ENCODE measurements at regions of chr10 and their contacts with region 1.

Region 1: DNA sequence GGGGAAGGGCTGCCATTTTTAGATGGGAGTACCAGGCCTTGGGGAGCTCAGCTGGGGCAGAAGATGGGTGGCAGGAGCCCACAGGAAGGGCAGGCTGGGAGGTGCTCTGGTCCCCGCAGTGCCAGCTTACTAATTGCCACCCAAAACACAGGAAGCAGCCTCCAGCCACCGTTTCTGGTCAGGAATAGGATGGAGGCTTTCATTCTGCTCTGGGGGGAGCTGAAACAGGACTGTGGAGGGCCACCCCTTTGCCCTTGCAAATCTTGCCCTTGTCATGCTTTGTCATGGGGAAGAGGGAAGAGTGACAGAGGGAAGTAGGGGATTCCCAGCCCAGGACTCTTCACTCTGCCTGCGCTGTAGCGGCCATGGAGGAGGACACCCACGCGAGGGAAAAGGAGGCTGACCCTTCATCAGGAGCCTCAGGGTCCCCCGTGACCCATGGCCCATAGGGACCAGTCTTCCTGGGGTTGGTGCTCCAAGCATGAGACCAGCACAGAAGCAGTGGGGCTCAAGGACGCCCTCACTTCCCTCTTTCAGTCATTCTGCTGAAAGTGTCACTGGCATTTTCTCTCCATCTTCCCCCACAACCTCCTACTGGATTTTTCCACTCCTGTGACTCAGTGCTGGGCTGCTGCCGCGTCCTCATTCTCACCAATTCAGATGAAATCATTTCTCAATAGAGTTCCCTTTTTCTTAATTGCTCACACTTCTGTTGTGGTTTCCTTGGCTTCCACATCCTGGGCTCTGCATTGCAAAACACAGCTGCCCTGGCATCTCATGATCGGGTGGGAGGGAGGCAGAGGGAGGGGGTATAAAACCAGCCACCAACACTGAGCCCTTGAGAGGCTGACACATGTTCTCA is 61.9 kb downstream of the MKI67 start:
- DNase-seq: peak; percentile 68
- ATAC-seq: peak; percentile 76
- H3K4me3 Mint-ChIP-seq: peak overlapping the region; percentile 57
- H3K27ac Mint-ChIP-seq: peak overlapping the region; percentile 86
- H3K4me1 Mint-ChIP-seq: peaks cover 71% of the 10 kb centered on the region
- H3K27me3 Mint-ChIP-seq: no peaks in the 10 kb centered on the region
- CTCF ChIP-seq: no peak

Region 2: DNA sequence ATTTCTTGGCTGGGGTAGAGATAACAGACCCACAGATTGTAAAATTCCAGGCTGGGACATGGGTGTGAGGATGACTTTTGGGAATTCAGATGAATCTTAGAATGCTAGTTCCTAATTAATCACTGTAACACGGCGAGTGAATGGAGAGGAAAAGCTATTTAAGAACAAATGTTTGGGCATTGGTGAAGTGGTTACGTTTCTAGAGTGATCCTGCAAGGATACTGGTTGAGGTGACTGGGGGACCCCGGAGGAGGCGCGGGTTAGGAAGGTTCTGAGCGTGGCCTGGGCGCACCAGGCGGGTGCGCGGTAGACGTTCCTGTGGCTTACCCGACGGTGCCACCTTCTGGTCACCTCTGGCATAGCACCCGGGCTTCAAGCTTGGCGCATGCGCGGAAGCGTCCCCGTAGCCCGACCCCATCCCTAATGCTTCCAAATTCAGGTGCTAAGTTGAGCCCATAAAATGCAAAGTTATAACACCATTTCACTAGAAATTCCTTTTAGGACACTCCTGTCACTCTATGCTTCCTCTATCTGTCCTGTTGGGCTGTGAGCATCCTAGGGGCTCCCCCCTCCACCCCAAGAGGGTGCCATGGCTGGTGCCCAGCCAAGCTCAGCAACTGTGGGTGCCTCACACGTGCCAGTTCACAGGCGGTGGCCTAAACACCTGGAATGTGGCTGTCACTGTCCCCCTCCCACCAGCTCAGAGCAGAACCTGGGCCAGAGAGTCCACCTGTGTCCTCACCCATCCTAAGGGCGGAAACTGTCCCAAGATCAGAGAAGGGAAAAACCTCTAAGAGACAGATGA is 53.0 kb before region 1 on chr10:
- CTCF ChIA-PET with region 1: interaction called, 19 read pairs
- POLR2A ChIA-PET with region 1: no interaction called
- intact Hi-C with region 1: loop called (anchors 1 kb)
- DNase-seq: peak; percentile 87
- ATAC-seq: peak; percentile 99
- H3K4me3 Mint-ChIP-seq: no peak overlapping the region
- H3K27ac Mint-ChIP-seq: peak overlapping the region; percentile 62
- H3K4me1 Mint-ChIP-seq: peaks cover 9% of the 10 kb centered on the region
- H3K27me3 Mint-ChIP-seq: peaks cover 12% of the 10 kb centered on the region
- CTCF ChIP-seq: peak; percentile 27

Region 3: DNA sequence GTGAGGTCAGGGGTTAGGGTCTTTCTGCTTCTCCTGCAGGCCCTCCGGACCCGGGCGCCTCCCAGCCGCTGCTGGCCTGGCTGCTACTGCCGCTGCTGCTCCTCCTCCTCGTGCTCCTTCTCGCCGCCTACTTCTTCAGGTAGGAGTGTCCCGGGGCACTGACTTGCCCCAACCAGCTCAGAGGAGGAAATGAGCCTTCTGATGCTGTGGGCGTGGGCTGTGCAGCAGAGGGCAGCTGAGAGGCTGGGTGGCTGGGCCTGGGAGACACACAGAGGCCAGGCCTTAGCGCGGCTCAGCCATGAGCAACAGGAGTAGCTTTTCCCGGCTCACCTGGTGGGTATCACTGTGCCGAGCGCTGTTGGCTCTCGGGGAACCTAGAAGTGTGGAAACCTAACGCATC is 17.0 kb before region 1 on chr10:
- CTCF ChIA-PET with region 1: interaction called, 31 read pairs
- POLR2A ChIA-PET with region 1: interaction called, 162 read pairs
- intact Hi-C with region 1: loop called (anchors 1 kb)
- DNase-seq: peak; percentile 61
- ATAC-seq: peak; percentile 100
- H3K4me3 Mint-ChIP-seq: peak overlapping the region; percentile 85
- H3K27ac Mint-ChIP-seq: peak overlapping the region; percentile 81
- H3K4me1 Mint-ChIP-seq: peaks cover 55% of the 10 kb centered on the region
- H3K27me3 Mint-ChIP-seq: no peaks in the 10 kb centered on the region
- CTCF ChIP-seq: no peak

Region 4: GRCh38 chr10:128150045-128150493 is 85.7 kb after region 1 on chr10:
- CTCF ChIA-PET with region 1: interaction called, 9 read pairs
- POLR2A ChIA-PET with region 1: interaction called, 4 read pairs
- intact Hi-C with region 1: loop called (anchors 1 kb)
- DNase-seq: peak; percentile 72
- ATAC-seq: peak; percentile 80
- H3K4me3 Mint-ChIP-seq: peak overlapping the region; percentile 59
- H3K27ac Mint-ChIP-seq: no peak overlapping the region
- H3K4me1 Mint-ChIP-seq: peaks cover 30% of the 10 kb centered on the region
- H3K27me3 Mint-ChIP-seq: peaks cover 11% of the 10 kb centered on the region
- CTCF ChIP-seq: no peak

Region 5: DNA sequence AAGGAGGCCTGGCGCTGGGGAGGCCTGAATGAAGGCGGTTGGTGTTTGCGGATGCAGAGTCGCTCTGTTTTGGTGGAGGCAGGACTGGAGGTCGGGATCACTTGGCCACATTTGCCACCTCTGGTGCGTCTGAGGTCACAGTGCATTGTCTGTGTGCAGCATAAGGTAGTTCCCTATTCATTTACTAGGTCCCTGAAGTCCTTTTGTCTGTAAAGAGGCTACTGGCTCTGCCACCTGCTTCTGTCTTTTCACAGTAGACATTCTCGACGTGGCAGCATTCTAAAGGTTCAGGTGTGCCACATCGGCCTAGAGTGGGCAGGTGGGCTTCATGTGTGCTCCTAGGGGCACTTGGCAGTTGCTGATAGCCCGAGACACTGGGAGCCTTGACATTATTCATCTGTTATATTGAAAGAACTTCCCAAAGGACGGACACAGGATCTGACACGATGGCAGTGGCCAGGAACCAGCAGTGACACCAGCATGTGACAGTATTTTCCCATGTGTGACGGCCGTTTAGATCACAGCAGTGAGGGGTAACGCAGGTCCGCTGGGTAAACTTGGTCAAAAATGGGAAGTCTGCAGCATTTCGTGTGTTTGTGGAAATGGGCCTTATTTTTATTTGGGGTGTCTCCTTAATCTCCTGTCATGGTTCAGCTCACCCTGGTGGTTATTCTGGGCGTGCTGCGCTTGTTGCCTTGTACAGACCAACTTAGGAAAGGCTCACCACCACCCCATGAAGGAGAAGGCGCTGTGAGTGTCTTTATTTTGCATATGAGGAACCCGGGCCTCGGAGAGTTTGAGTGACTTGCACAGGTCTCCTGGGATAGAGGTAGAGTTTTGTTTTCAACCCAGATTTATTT is 1408.6 kb after region 1 on chr10:
- CTCF ChIA-PET with region 1: no interaction called
- POLR2A ChIA-PET with region 1: no interaction called
- intact Hi-C with region 1: loop called (anchors 5 kb)
- DNase-seq: peak; percentile 27
- ATAC-seq: peak; percentile 87
- H3K4me3 Mint-ChIP-seq: peak overlapping the region; percentile 62
- H3K27ac Mint-ChIP-seq: peak overlapping the region; percentile 87
- H3K4me1 Mint-ChIP-seq: peaks cover 45% of the 10 kb centered on the region
- H3K27me3 Mint-ChIP-seq: no peaks in the 10 kb centered on the region
- CTCF ChIP-seq: no peak

Measured in activated B cell treated with CpG ODN at 0.5 μM for 24 hours (primary cell).